ENCODE measurements at regions of chr11 and their contacts with region 1.

Region 1: GRCh38 chr11:134393638-134394037 is 18.4 kb downstream of the B3GAT1 start:
- DNase-seq: peak; percentile 61 to 67
- H3K4me3 ChIP-seq: no peak overlapping the region
- H3K4me3 Mint-ChIP-seq: no peak overlapping the region
- H3K27ac Mint-ChIP-seq: no peak overlapping the region
- H3K4me1 ChIP-seq: no peaks in the 10 kb centered on the region
- H3K4me1 Mint-ChIP-seq: no peaks in the 10 kb centered on the region
- H3K27me3 ChIP-seq: peaks cover 1% of the 10 kb centered on the region; the same call in 1 of the 2 replicates
- H3K27me3 Mint-ChIP-seq: peaks cover 3% of the 10 kb centered on the region
- CTCF ChIP-seq: peak; percentile 61 to 88

Region 2: GRCh38 chr11:134313821-134314607 is 79.6 kb before region 1 on chr11:
- CTCF ChIA-PET with region 1: no interaction called
- POLR2A ChIA-PET with region 1: no interaction called
- intact Hi-C with region 1: no loop called
- DNase-seq: no peak
- H3K4me3 ChIP-seq: no peak overlapping the region
- H3K4me3 Mint-ChIP-seq: no peak overlapping the region
- H3K27ac Mint-ChIP-seq: no peak overlapping the region
- H3K4me1 ChIP-seq: no peaks in the 10 kb centered on the region
- H3K4me1 Mint-ChIP-seq: no peaks in the 10 kb centered on the region
- H3K27me3 ChIP-seq: no peaks in the 10 kb centered on the region
- H3K27me3 Mint-ChIP-seq: peaks cover 31% of the 10 kb centered on the region
- CTCF ChIP-seq: no peak

Region 3: DNA sequence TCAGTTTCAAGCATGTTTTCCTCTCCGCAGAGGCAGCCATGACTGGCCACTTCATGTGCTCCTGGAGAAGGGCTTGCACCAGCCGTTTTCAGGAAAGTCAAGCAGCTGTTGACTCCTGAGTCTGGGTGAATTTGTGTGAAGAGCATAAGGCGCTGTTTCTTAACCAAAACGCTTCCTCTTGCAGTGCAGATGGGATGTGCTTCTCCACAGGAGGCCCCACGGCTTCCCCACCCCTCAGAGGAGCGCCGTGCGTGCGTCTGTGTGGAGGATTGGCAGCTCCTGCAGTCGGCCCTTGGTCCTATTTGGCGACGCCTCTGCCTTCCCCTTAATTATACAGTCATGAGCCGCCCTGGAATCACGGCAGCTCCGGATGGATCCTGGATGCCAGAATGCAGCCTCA is 72.5 kb after region 1 on chr11:
- CTCF ChIA-PET with region 1: no interaction called
- POLR2A ChIA-PET with region 1: no interaction called
- intact Hi-C with region 1: loop called (anchors 1 kb)
- DNase-seq: no peak
- H3K4me3 ChIP-seq: no peak overlapping the region
- H3K4me3 Mint-ChIP-seq: no peak overlapping the region
- H3K27ac Mint-ChIP-seq: no peak overlapping the region
- H3K4me1 ChIP-seq: peaks cover 18% of the 10 kb centered on the region
- H3K4me1 Mint-ChIP-seq: peaks cover 6% of the 10 kb centered on the region
- H3K27me3 ChIP-seq: no peaks in the 10 kb centered on the region
- H3K27me3 Mint-ChIP-seq: peaks cover 4% of the 10 kb centered on the region
- CTCF ChIP-seq: no peak

Region 4: GRCh38 chr11:134701564-134702165 is 308.0 kb after region 1 on chr11:
- CTCF ChIA-PET with region 1: no interaction called
- POLR2A ChIA-PET with region 1: no interaction called
- intact Hi-C with region 1: no loop called
- DNase-seq: no peak
- H3K4me3 ChIP-seq: no peak overlapping the region
- H3K4me3 Mint-ChIP-seq: no peak overlapping the region
- H3K27ac Mint-ChIP-seq: no peak overlapping the region
- H3K4me1 ChIP-seq: no peaks in the 10 kb centered on the region
- H3K4me1 Mint-ChIP-seq: peaks cover 5% of the 10 kb centered on the region
- H3K27me3 ChIP-seq: no peaks in the 10 kb centered on the region
- H3K27me3 Mint-ChIP-seq: no peaks in the 10 kb centered on the region
- CTCF ChIP-seq: no peak

Measured in Caco-2 (cell line).